Activated CD4-positive, alpha-beta T cell treated with anti-CD3 and anti-CD28 coated beads, Interleukin-2, amount 10 ng/mL, durations not matched to agents 24 days and 14 days (primary cell): ENCODE measurements at regions of chr10 and their contacts with region 1.

Region 1: GRCh38 chr10:12635127-12635541 is 285.8 kb downstream of the CAMK1D start:
- DNase-seq: peak; percentile 89
- H3K4me3 Mint-ChIP-seq: peak overlapping the region; percentile 61
- H3K27ac Mint-ChIP-seq: peak overlapping the region; percentile 95
- H3K4me1 Mint-ChIP-seq: peaks cover 54% of the 10 kb centered on the region
- H3K27me3 Mint-ChIP-seq: no peaks in the 10 kb centered on the region

Region 2: GRCh38 chr10:12348870-12349628 is 286.1 kb before region 1 on chr10 and contains the start of gene CAMK1D:
- intact Hi-C with region 1: loop called (anchors 2 kb)
- DNase-seq: peak; percentile 95
- H3K4me3 Mint-ChIP-seq: peak within 1 kb of the TSS; percentile 90
- H3K27ac Mint-ChIP-seq: peak within 1 kb of the TSS; percentile 97
- H3K4me1 Mint-ChIP-seq: peaks cover 34% of the 10 kb centered on the region
- H3K27me3 Mint-ChIP-seq: peaks cover 53% of the 10 kb centered on the region
- total RNA-seq, gene CAMK1D: 5.6 and 6.6 TPM in 2 replicates

Region 3: GRCh38 chr10:12412666-12413368 is 222.3 kb before region 1 on chr10:
- intact Hi-C with region 1: loop called (anchors 1 kb)
- DNase-seq: peak; percentile 84
- H3K4me3 Mint-ChIP-seq: peak overlapping the region; percentile 5
- H3K27ac Mint-ChIP-seq: peak overlapping the region; percentile 7
- H3K4me1 Mint-ChIP-seq: peaks cover 19% of the 10 kb centered on the region
- H3K27me3 Mint-ChIP-seq: peaks cover 5% of the 10 kb centered on the region

Region 4: GRCh38 chr10:12419262-12419847 is 215.8 kb before region 1 on chr10:
- intact Hi-C with region 1: loop called (anchors 1 kb)
- DNase-seq: peak; percentile 78
- H3K4me3 Mint-ChIP-seq: no peak overlapping the region
- H3K27ac Mint-ChIP-seq: peak overlapping the region; percentile 58
- H3K4me1 Mint-ChIP-seq: peaks cover 12% of the 10 kb centered on the region
- H3K27me3 Mint-ChIP-seq: peaks cover 2% of the 10 kb centered on the region

Region 5: DNA sequence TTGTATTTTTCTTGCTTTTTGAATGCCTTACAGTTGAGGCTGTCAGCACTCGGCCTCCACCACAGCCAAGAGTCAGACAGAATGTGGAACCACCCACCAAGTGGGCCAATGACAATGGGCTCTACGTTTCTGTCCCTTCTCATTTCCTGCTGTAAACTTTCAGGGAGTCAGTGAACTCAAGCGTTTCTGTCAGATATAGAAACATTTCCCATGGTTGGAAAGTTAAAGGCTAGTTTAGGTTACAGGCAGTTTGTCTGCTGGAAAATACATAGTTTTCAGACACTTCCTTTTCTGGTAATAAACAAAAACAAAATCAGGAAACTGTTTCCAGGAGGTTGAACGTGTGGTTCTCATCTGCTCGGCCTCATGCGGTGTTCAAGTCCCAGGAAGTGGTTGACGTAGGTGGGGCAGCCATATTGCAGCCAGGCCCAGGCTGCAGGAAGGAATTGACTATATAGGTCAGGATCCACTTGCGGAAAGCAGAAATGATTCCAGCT is 40.6 kb before region 1 on chr10:
- intact Hi-C with region 1: loop called (anchors 2 kb)
- DNase-seq: peak; percentile 87
- H3K4me3 Mint-ChIP-seq: peak overlapping the region; percentile 61
- H3K27ac Mint-ChIP-seq: peak overlapping the region; percentile 88
- H3K4me1 Mint-ChIP-seq: peaks cover 80% of the 10 kb centered on the region
- H3K27me3 Mint-ChIP-seq: no peaks in the 10 kb centered on the region

Region 6: DNA sequence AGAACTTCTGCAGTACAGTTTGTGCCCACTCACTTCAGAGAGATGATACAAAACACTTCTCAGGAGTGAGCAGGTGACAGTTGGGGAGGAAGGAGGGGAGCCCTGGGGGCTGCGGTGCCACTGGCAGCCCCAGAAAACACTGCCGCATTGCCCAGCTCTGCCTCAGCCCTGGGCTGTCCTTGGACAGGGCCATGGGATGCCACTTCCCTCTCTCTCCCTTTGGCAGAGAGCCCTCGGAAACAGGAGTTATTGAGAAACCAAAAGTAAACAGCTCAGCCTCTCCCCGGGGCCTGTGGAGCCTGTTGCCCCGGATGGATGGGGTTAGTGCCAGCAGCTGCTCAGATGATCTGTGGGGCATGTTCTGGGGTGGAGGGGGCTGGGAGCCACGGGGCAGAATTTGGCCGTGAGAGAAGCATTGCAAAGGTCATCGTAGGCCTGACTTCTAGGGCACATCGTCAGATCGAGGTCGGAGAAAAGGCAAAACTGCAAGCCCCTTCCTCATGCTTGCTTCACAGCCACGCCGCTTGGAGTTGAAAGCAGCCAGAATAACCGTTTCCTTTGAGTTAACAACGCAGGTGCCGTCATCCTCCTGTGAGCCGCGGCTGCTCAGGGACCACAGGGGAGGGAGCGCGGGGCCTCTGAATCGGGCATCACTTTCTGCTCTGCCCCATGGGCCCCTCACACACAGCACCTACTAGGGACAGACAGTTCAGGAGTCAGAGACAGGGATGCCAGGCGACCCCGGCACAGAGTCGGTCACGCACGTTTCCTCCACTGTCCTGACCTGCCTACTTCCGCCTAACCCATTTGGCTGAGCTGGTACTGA is 29.3 kb before region 1 on chr10:
- intact Hi-C with region 1: loop called (anchors 2 kb)
- DNase-seq: peak; percentile 89
- H3K4me3 Mint-ChIP-seq: peak overlapping the region; percentile 86
- H3K27ac Mint-ChIP-seq: peak overlapping the region; percentile 99
- H3K4me1 Mint-ChIP-seq: peaks cover 25% of the 10 kb centered on the region
- H3K27me3 Mint-ChIP-seq: no peaks in the 10 kb centered on the region